Endothelial cell of umbilical vein (primary cell): ENCODE measurements at regions of chr15 and their contacts with region 1.

Region 1: GRCh38 chr15:76190834-76191538 is 120.3 kb downstream of the ETFA start:
- DNase-seq: peak; percentile 68
- H3K4me3 ChIP-seq: no peak overlapping the region
- H3K27ac ChIP-seq: no peak overlapping the region
- H3K4me1 ChIP-seq: peaks cover 3% of the 10 kb centered on the region
- H3K27me3 ChIP-seq: peaks cover 0 to 2% of the 10 kb centered on the region in 2 experiments
- CTCF ChIP-seq: peak; percentile 84 to 95
- POLR2A ChIP-seq: no peak

Region 2: DNA sequence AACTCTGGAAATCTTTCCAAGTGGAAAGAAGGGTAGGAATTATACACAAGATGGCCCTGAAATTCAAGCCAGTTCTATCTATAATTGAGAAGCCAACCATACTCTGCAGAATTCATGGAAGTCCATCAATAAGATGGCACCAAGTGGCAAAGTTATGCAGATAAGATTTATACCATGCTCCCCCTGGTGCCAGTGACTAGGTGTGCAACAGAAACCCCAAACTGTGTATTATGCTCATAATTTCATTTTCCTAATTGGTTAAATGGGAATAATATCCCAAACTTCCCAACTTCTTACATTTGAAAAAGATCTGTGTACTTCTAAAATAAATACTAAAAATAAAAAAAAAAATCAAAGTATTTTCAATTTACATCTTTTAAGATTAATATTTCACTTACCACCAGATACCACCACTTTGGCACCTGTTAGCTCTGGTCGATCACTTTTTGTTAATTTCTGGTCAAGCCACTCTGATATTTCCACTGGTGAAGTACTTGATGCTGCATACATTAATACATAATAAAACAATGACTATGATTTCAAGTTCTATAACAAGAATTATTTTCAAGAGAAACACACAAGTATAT is 94.3 kb after region 1 on chr15:
- CTCF ChIA-PET with region 1: interaction called, 7 read pairs
- POLR2A ChIA-PET with region 1: no interaction called
- dilution Hi-C with region 1: no loop called
- intact Hi-C with region 1: loop called (anchors 2 kb)
- DNase-seq: peak; percentile 28
- H3K4me3 ChIP-seq: no peak overlapping the region
- H3K27ac ChIP-seq: no peak overlapping the region
- H3K4me1 ChIP-seq: no peaks in the 10 kb centered on the region
- H3K27me3 ChIP-seq: no peaks in the 10 kb centered on the region
- CTCF ChIP-seq: peak; percentile 37 to 55
- POLR2A ChIP-seq: no peak

Region 3: DNA sequence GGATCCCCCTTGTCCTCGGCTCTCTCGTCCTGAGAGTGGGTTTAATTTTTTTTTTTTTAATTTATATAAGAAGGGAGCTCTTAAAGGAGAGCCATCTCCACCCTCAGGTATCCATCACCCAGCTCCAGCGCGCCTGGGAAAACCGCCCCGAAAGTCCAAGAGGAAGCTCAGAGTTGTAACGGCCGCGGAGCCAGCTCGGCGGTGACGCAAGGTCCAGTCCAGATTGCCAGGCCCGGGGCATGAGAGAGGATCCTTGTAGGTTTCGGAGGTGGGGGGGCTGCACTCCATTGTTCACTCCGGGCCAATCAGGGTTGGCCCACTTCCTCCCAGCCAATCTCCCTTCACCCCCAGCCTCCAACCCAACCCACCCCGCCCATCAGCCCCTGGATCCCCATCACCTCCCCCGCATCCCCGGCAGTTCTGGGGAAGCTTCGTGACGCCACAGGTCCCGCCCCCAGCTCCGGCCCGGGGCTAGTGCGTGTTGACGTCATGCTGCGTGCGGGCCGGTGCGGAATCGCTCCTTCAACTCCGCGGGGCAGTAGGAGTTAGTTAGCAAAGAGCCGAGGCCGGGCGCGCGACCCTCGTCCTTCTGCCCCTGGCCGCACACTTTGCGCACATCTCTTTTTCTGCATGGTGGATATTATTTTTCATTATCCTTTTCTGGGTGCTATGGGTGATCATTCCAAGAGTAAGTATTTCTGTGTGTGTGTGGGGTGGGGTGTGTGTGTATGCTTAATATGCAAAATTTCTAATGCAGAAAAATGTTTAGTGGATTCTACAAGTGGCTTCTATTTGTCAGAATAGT is 145.5 kb after region 1 on chr15 and contains the start of gene ISL2:
- CTCF ChIA-PET with region 1: interaction called, 54 read pairs
- POLR2A ChIA-PET with region 1: interaction called, 5 read pairs
- dilution Hi-C with region 1: no loop called
- intact Hi-C with region 1: no loop called
- DNase-seq: peak; percentile 60
- H3K4me3 ChIP-seq: peak within 1 kb of the TSS in 2 of 3 experiments; percentile 28 to 52
- H3K27ac ChIP-seq: no peak within 1 kb of the TSS
- H3K4me1 ChIP-seq: peaks cover 20% of the 10 kb centered on the region
- H3K27me3 ChIP-seq: peaks cover 54 to 74% of the 10 kb centered on the region in 2 experiments
- CTCF ChIP-seq: no peak
- POLR2A ChIP-seq: peak; percentile 32
- total RNA-seq, gene ISL2: not detected in 2 replicates

Region 4: GRCh38 chr15:76426941-76427340 is 236.0 kb after region 1 on chr15:
- CTCF ChIA-PET with region 1: no interaction called
- POLR2A ChIA-PET with region 1: no interaction called
- dilution Hi-C with region 1: no loop called
- intact Hi-C with region 1: no loop called
- DNase-seq: no peak
- H3K4me3 ChIP-seq: no peak overlapping the region
- H3K27ac ChIP-seq: no peak overlapping the region
- H3K4me1 ChIP-seq: no peaks in the 10 kb centered on the region
- H3K27me3 ChIP-seq: no peaks in the 10 kb centered on the region
- CTCF ChIP-seq: no peak
- POLR2A ChIP-seq: no peak

Region 5: DNA sequence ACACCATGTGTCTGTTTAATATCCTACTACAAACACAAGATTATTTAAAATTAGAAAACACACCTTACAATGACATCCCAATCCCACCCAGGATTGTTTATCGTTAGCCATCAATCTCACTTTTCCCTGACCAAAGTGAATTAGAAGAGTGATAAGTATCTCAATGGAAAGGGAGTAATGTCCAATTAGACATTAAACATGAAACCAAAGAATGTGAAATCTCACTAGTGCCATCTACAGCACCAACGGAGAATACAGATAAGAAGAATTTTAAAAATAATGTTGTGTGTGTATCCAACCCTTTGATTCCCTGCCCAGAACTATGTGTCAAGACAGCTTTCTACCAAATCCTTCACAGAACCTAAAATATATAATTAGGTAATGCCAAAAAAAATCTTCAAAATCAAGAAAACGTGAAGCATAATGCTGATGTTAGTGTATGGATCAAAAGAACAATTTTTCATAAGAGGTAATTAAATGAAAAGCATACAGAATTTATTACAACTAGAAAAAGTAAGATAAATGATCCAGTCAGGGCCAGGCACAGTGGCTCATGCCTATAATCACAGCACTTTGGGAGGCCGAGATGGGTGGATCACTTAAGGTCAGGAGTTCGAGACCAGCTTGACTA is 650.0 kb after region 1 on chr15:
- CTCF ChIA-PET with region 1: interaction called, 4 read pairs
- POLR2A ChIA-PET with region 1: no interaction called
- dilution Hi-C with region 1: no loop called
- intact Hi-C with region 1: loop called (anchors 1 kb)
- DNase-seq: peak; percentile 51
- H3K4me3 ChIP-seq: no peak overlapping the region
- H3K27ac ChIP-seq: no peak overlapping the region
- H3K4me1 ChIP-seq: no peaks in the 10 kb centered on the region
- H3K27me3 ChIP-seq: no peaks in the 10 kb centered on the region
- CTCF ChIP-seq: peak; percentile 29 to 35
- POLR2A ChIP-seq: no peak

Region 6: DNA sequence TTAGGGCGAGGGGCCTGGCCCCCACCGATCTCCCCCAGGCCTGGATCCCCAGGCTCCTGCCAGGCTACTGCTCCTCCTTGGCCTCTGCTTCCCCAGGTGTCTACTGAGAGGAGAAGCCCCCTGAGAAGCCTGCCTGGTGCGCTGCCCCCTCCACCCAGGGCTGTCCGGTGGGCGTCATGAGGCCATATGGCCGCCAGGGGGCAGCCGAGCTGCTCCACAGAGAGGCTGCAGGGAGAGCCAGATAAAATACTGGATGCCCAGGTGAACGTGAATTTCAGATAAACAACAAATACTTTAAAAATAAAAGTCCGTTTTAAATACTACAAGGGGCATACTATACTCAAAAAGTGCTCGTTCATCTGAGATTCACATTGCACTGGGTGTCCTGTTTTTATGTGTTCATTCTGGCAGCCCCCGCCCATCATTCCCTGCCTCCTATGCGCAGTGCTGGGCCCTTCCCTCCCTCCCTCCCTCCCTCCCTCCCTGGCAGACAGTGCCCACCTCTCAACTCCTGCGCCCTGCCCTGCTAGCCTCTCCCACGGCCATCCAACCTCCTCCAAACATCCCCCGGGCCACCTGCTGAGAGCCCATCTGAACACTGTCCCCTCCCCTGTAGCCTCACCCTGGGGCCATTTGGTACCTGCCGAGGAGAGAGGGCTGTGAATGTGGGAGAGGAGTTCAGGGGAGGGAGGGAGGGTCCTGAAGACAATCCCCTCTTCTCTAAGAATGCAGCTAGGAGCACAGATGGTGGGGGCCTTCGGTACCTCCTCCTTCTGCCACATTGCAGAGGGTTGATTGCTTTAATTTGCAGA is 833.5 kb after region 1 on chr15:
- CTCF ChIA-PET with region 1: no interaction called
- POLR2A ChIA-PET with region 1: no interaction called
- dilution Hi-C with region 1: no loop called
- intact Hi-C with region 1: loop called (anchors 5 kb)
- DNase-seq: peak; percentile 40
- H3K4me3 ChIP-seq: no peak overlapping the region
- H3K27ac ChIP-seq: no peak overlapping the region
- H3K4me1 ChIP-seq: peaks cover 11% of the 10 kb centered on the region
- H3K27me3 ChIP-seq: no peaks in the 10 kb centered on the region
- CTCF ChIP-seq: peak; percentile 91
- POLR2A ChIP-seq: no peak